ENCODE measurements at regions of chr12 and their contacts with region 1.

Region 1: DNA sequence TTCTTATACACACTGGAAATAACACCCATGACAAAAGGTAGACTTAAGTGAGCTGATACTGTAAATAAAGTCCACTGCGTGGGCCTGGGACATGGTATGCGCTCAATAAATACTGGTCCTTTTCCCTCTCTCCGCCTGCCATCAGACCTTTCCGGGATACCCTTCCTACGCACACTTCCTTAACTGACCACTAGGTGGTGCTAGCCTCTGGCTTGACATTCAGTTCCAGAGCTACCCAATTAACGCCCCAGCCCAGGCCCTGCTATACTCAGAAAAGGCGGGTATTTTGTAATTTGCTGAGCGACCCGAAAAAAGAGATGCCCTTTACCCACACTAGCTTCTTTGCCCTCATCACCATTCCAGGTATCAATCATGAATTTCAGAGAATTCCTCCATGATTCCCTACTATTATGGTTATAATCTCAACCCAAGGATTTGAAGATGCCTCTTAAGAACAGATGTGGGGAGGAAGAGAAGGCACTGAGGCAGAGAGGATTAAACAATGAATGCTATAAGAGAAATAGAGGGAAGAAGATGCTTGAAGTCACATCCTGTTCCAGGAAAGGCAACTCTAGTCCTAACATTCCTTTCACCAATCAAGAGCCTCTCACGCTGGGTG is 3.9 kb upstream of the LRP1 start:
- DNase-seq: peak; percentile 73 to 78 (median 78)
- H3K4me3 ChIP-seq: no peak overlapping the region
- H3K4me3 Mint-ChIP-seq: peak overlapping the region in 1 of 8 donors; percentile 1
- H3K27ac ChIP-seq: no peak overlapping the region
- H3K27ac Mint-ChIP-seq: peak overlapping the region in 1 of 7 donors; percentile 43
- H3K4me1 ChIP-seq: peaks cover 8% of the 10 kb centered on the region
- H3K4me1 Mint-ChIP-seq: peaks cover 2 to 10% (median 6%) of the 10 kb centered on the region in 4 donors
- H3K27me3 ChIP-seq: no peaks in the 10 kb centered on the region
- H3K27me3 Mint-ChIP-seq: no peaks in the 10 kb centered on the region

Region 2: GRCh38 chr12:57069523-57069922 is 54.8 kb before region 1 on chr12:
- CTCF ChIA-PET with region 1: interaction called, 28 read pairs
- POLR2A ChIA-PET with region 1: interaction called, 4 read pairs
- intact Hi-C with region 1: no loop called
- DNase-seq: peak; percentile 73 to 77 (median 75)
- H3K4me3 ChIP-seq: no peak overlapping the region
- H3K4me3 Mint-ChIP-seq: peak overlapping the region in 3 of 8 donors; percentile 0 to 37 (median 28)
- H3K27ac ChIP-seq: peak overlapping the region; percentile 57
- H3K27ac Mint-ChIP-seq: peak overlapping the region; percentile 75 to 89 (median 85)
- H3K4me1 ChIP-seq: peaks cover 25% of the 10 kb centered on the region
- H3K4me1 Mint-ChIP-seq: peaks cover 11 to 34% (median 15%) of the 10 kb centered on the region in 4 donors
- H3K27me3 ChIP-seq: no peaks in the 10 kb centered on the region
- H3K27me3 Mint-ChIP-seq: no peaks in the 10 kb centered on the region

Region 3: GRCh38 chr12:57088459-57089248 is 35.7 kb before region 1 on chr12 and contains the start of gene NAB2:
- CTCF ChIA-PET with region 1: interaction called, 11 read pairs
- POLR2A ChIA-PET with region 1: interaction called, 11 read pairs
- intact Hi-C with region 1: no loop called
- DNase-seq: peak; percentile 89 to 94 (median 92)
- H3K4me3 ChIP-seq: peak within 1 kb of the TSS; percentile 90 to 91
- H3K4me3 Mint-ChIP-seq: peak within 1 kb of the TSS; percentile 92 to 98 (median 95)
- H3K27ac ChIP-seq: peak within 1 kb of the TSS; percentile 97
- H3K27ac Mint-ChIP-seq: peak within 1 kb of the TSS; percentile 97 to 99 (median 98)
- H3K4me1 ChIP-seq: peaks cover 52% of the 10 kb centered on the region
- H3K4me1 Mint-ChIP-seq: peaks cover 40 to 78% (median 53%) of the 10 kb centered on the region in 4 donors
- H3K27me3 ChIP-seq: no peaks in the 10 kb centered on the region
- H3K27me3 Mint-ChIP-seq: no peaks in the 10 kb centered on the region
- total RNA-seq, gene NAB2: 17.5 to 19.5 TPM

Region 4: DNA sequence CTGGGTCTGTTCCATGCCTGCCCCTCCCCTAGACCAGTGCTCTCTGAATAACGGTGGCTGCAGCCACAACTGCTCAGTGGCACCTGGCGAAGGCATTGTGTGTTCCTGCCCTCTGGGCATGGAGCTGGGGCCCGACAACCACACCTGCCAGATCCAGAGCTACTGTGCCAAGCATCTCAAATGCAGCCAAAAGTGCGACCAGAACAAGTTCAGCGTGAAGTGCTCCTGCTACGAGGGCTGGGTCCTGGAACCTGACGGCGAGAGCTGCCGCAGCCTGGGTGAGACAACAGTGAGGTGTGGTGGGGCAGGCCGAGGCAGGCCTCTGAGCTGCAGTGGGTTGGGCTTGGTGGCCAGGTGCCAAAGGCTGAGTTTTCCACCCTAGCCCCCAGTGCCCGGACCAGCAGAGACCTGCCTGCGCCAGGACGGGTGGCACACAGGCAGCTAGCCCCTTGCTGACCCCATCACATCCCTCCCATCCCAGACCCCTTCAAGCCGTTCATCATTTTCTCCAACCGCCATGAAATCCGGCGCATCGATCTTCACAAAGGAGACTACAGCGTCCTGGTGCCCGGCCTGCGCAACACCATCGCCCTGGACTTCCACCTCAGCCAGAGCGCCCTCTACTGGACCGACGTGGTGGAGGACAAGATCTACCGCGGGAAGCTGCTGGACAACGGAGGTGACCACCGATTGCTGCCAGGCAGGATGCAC is 51.2 kb after region 1 on chr12:
- CTCF ChIA-PET with region 1: interaction called, 207 read pairs
- POLR2A ChIA-PET with region 1: no interaction called
- intact Hi-C with region 1: loop called (anchors 2 kb)
- DNase-seq: peak in 3 of 5 donors; percentile 14 to 43 (median 24)
- H3K4me3 ChIP-seq: no peak overlapping the region
- H3K4me3 Mint-ChIP-seq: no peak overlapping the region
- H3K27ac ChIP-seq: no peak overlapping the region
- H3K27ac Mint-ChIP-seq: no peak overlapping the region
- H3K4me1 ChIP-seq: no peaks in the 10 kb centered on the region
- H3K4me1 Mint-ChIP-seq: peaks cover 0 to 5% (median 3%) of the 10 kb centered on the region in 4 donors
- H3K27me3 ChIP-seq: no peaks in the 10 kb centered on the region
- H3K27me3 Mint-ChIP-seq: no peaks in the 10 kb centered on the region

Region 5: GRCh38 chr12:57238854-57239554 is 114.6 kb after region 1 on chr12:
- CTCF ChIA-PET with region 1: interaction called, 8 read pairs
- POLR2A ChIA-PET with region 1: interaction called, 5 read pairs
- intact Hi-C with region 1: loop called (anchors 1 kb)
- DNase-seq: peak; percentile 80 to 87 (median 82)
- H3K4me3 ChIP-seq: peak overlapping the region; percentile 42 to 79
- H3K4me3 Mint-ChIP-seq: peak overlapping the region; percentile 90 to 98 (median 94)
- H3K27ac ChIP-seq: no peak overlapping the region
- H3K27ac Mint-ChIP-seq: peak overlapping the region in 6 of 7 donors; percentile 7 to 85 (median 62)
- H3K4me1 ChIP-seq: peaks cover 87% of the 10 kb centered on the region
- H3K4me1 Mint-ChIP-seq: peaks cover 41 to 88% (median 60%) of the 10 kb centered on the region in 4 donors
- H3K27me3 ChIP-seq: peaks cover 43% of the 10 kb centered on the region
- H3K27me3 Mint-ChIP-seq: peaks cover 32 to 52% of the 10 kb centered on the region in 2 donors